Posterior cingulate gyrus (tissue), 11 donors: ENCODE measurements at regions of chr2 and their contacts with region 1.

Region 1: GRCh38 chr2:3558205-3559014 is at the start of gene RNASEH1:
- DNase-seq: peak; percentile 97 to 100 (median 99)

Region 2: DNA sequence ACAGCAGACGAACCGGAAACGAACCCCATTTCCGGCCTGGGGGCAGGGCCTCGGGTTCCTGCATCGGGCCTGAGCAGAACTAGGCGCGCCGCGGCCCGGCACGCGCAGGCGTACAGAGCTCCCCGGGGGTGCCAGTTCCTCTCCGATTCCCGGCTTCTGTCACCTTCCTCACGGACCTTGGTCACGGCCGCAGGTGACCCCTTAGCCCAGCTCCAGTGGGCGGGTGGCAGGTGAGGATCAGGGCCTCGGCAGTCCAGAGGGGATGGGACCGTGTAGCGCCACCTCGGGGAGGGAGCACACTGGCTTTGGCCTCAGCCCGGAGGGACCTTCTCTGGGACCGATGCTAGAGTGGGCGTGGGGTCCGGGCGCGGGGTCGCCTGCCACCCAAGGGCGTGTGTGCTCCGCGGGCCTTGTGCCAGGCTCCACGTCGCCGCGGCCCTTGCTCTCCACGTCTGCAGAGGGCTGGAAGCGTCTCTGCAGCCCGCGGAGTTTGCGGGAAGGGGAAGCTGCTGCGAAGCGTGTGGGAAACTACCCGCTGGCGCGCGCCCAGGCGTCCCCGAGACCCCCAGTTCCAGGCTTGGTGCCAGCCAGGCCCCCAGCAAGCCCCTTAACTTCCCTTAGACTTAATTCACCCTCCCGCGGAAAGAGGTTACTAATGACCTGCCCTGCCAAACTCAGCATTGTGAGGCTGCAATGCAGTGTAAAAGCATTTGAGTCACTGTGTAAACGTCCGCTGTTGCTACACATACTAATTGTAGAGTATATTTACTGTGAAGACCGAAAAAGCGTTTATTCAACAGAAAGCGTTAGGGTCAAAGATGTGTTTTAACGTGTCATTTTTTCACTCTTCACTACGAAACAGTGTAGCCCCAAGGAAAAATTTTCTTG is 178.5 kb before region 1 on chr2 and contains the start of gene TRAPPC12:
- intact Hi-C with region 1: loop called (anchors 5 kb)
- DNase-seq: peak; percentile 90 to 99 (median 92)

Region 3: DNA sequence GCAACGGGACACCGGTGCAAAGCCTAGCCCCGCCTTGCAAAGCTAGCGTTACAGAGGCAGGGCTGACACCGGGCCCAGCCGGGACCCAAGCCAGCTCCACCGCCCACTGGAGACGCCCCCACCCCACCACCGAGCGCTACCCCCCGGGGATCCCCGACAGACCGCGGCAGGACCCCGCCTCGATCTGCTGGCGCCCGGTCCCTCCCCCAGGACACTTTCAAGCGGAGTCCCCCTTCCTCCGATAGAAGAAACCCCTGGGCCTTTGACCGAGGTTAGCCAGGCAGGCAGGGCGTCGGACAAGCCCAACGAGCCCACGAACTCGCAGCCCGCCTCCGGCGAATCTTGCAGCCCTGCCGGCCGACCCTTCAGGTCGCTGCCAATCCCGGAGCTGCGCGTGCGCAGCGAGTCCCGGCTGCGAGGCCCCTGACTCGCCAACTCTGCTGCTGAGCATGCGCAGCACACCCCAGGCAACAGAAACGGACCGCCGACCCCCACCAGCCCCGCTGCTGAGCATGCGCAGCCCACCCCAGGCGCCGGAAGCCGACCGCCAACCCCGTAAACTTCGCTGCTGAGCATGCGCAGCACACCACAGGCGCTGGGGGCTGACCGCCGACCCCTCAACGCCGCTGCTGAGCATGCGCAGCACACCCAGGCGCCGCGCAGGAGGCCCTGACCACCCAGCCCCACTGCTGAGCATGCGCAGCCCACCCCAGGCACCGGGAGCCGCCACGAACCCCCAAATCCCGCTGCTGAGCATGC is 39.7 kb before region 1 on chr2:
- intact Hi-C with region 1: loop called (anchors 2 kb)
- DNase-seq: peak; percentile 91 to 99 (median 94)

Region 4: GRCh38 chr2:3594493-3595281 is 36.3 kb after region 1 on chr2 and contains the start of gene COLEC11:
- intact Hi-C with region 1: no loop called
- DNase-seq: peak in 2 of 10 donors; percentile 74 to 84

Region 5: DNA sequence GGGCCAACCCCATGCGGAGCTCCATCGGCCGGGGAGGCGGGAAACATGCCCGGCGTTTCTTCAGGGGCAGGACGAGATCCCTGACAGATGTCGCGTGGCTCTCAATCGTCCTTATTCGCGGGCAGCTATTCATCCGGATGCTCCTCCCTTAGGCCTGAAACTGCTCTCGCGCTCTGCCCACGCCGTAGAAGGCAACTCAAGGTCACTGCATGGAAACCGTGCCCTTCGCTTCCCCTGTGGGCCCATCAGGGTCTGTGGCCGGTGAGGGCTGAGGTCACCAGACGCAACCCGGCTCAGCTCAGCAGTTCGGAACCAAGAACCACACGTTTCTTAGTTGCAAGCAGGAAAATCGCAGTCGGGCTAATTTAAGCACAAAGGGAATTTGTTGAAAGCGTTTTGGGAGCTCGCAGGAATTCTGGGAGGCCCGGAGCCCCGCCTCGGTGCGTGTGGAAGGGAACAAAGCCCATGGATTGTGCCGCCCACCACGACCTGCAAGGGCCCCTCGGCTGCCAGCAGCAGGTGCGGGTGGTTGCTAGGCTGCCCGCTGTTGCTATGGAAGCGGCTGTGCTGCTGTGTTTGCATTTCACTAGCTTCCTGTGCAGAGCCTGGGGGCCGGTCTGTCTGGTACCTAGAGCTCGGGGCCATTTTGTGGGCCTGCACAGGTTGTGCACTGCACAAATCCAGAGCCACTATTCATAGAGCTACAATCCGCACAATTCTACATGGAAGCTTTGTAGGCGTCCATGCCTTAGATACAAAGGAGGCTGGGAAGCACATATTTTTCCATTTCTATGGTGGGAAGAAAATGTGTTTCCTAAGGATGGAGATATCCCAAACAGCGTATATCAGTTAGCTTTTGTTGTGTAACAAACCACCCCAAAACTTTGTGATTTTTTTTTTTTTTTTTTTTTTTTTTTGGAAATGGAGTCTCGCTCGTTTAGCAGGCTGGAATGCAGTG is 93.6 kb after region 1 on chr2:
- intact Hi-C with region 1: loop called (anchors 5 kb)
- DNase-seq: peak; percentile 50 to 97 (median 82)

Region 6: DNA sequence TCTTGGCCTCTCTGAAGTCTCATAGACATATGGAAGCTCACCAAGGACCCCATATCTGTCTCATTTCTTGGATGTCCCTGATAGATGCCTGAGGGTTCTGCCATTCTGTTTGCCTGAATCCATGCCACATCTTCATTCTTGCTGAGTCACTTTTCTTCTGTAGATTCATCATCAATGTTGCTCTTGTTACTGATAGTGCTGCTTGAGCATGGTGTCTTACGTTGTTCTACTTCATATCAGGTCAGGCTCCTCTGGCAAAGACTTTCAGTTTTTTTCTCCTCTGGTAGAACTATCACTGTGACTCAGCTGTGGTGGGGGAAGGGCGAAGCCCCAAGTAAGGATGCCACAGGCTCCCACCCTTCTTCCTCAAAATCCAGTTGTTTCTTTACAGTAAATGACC is 1030.2 kb after region 1 on chr2:
- intact Hi-C with region 1: no loop called
- DNase-seq: no peak